Dendritic cell treated with granulocyte-macrophage colony-stimulating factor and Interleukin-4, amounts not matched to agents 40 ng/mL and 50 ng/mL, for 4 days (primary cell): ENCODE measurements at regions of chr1 and their contacts with region 1.

Region 1: GRCh38 chr1:26391450-26391849 is 18.9 kb upstream of the ZNF683 start:
- H3K4me3 Mint-ChIP-seq: no peak overlapping the region
- H3K27ac Mint-ChIP-seq: no peak overlapping the region
- H3K4me1 Mint-ChIP-seq: peaks cover 21% of the 10 kb centered on the region
- H3K27me3 Mint-ChIP-seq: peaks cover 40% of the 10 kb centered on the region

Region 2: GRCh38 chr1:26169669-26170471 is 221.6 kb before region 1 on chr1 and contains the start of gene ZNF593:
- intact Hi-C with region 1: loop called (anchors 10 kb)
- H3K4me3 Mint-ChIP-seq: peak within 1 kb of the TSS; percentile 93
- H3K27ac Mint-ChIP-seq: peak within 1 kb of the TSS; percentile 91
- H3K4me1 Mint-ChIP-seq: peaks cover 25% of the 10 kb centered on the region
- H3K27me3 Mint-ChIP-seq: peaks cover 17% of the 10 kb centered on the region

Region 3: GRCh38 chr1:26279456-26280332 is 111.8 kb before region 1 on chr1 and contains the start of gene SH3BGRL3:
- intact Hi-C with region 1: loop called (anchors 10 kb)
- H3K4me3 Mint-ChIP-seq: peak within 1 kb of the TSS; percentile 86
- H3K27ac Mint-ChIP-seq: peak within 1 kb of the TSS; percentile 94
- H3K4me1 Mint-ChIP-seq: peaks cover 92% of the 10 kb centered on the region
- H3K27me3 Mint-ChIP-seq: no peaks in the 10 kb centered on the region